IMR-90 (cell line): ENCODE measurements at regions of chr7 and their contacts with region 1.

Region 1: DNA sequence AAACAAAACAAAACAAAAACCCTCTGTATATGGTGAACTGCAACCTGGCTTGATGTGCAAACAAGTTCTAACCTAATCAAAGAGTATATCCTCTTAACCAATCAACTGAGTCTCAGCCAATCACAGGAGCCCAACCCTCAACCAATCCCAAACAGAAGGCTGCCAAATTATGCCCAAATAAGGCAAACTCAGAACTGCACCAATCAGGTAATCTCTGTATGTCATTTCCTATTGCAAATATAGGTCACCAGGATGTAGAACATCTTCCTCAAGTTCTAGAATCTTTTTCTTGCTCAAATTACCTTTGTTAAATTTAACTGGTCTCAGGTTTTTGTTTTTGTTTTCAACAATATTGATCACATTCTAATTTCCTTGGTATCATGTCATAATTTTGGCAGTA is 5.2 kb downstream of the FAM133B start:
- DNase-seq: no peak
- ATAC-seq: no peak
- H3K4me3 ChIP-seq: no peak overlapping the region
- H3K27ac ChIP-seq: no peak overlapping the region
- H3K4me1 ChIP-seq: peaks cover 8% of the 10 kb centered on the region
- H3K27me3 ChIP-seq: no peaks in the 10 kb centered on the region
- CTCF ChIP-seq: no peak
- POLR2A ChIP-seq: no peak
- RAD21 ChIP-seq: no peak

Region 2: GRCh38 chr7:92306153-92306552 is 278.8 kb before region 1 on chr7:
- CTCF ChIA-PET with region 1: no interaction called
- POLR2A ChIA-PET with region 1: interaction called, 15 read pairs
- dilution Hi-C with region 1: no loop called
- in situ Hi-C with region 1: no loop called
- intact Hi-C with region 1: no loop called
- DNase-seq: peak; percentile 11
- ATAC-seq: no peak; the same call in 1 of the 2 replicates
- H3K4me3 ChIP-seq: no peak overlapping the region
- H3K27ac ChIP-seq: no peak overlapping the region
- H3K4me1 ChIP-seq: peaks cover 3% of the 10 kb centered on the region
- H3K27me3 ChIP-seq: no peaks in the 10 kb centered on the region
- CTCF ChIP-seq: no peak
- POLR2A ChIP-seq: no peak
- RAD21 ChIP-seq: no peak

Region 3: GRCh38 chr7:92528188-92528957 is 56.6 kb before region 1 on chr7 and contains the starts of genes PEX1 and RBM48:
- CTCF ChIA-PET with region 1: no interaction called
- POLR2A ChIA-PET with region 1: no interaction called
- dilution Hi-C with region 1: no loop called
- in situ Hi-C with region 1: no loop called
- intact Hi-C with region 1: loop called (anchors 5 kb)
- DNase-seq: peak; percentile 99
- ATAC-seq: peak; percentile 97
- H3K4me3 ChIP-seq: peak within 1 kb of the TSS; percentile 95
- H3K27ac ChIP-seq: peak within 1 kb of the TSS; percentile 92
- H3K4me1 ChIP-seq: peaks cover 2% of the 10 kb centered on the region; the same call in 1 of the 2 replicates
- H3K27me3 ChIP-seq: no peaks in the 10 kb centered on the region
- CTCF ChIP-seq: peak; percentile 49
- POLR2A ChIP-seq: peak; percentile 89
- RAD21 ChIP-seq: peak; percentile 1; the same call in 1 of the 2 replicates
- total RNA-seq, gene PEX1: 12.7 and 13.9 TPM in 2 replicates
- total RNA-seq, gene RBM48: 5.6 and 10.6 TPM in 2 replicates

Region 4: GRCh38 chr7:92534572-92534971 is 50.4 kb before region 1 on chr7:
- CTCF ChIA-PET with region 1: no interaction called
- POLR2A ChIA-PET with region 1: interaction called, 29 read pairs
- dilution Hi-C with region 1: no loop called
- in situ Hi-C with region 1: no loop called
- intact Hi-C with region 1: loop called (anchors 5 kb)
- DNase-seq: no peak
- ATAC-seq: no peak
- H3K4me3 ChIP-seq: no peak overlapping the region
- H3K27ac ChIP-seq: no peak overlapping the region
- H3K4me1 ChIP-seq: 0 out of 2 replicates have a peak, but pooled peaks cover 2% of the 10 kb centered on the region
- H3K27me3 ChIP-seq: no peaks in the 10 kb centered on the region
- CTCF ChIP-seq: no peak
- POLR2A ChIP-seq: no peak
- RAD21 ChIP-seq: no peak